IMR-90 (cell line): ENCODE measurements at regions of chr17 and their contacts with region 1.

Region 1: GRCh38 chr17:59372138-59372857 is 40.8 kb downstream of the YPEL2 start:
- DNase-seq: peak; percentile 54
- ATAC-seq: peak; percentile 78
- H3K4me3 ChIP-seq: no peak overlapping the region
- H3K27ac ChIP-seq: peak overlapping the region; percentile 32; the same call in 1 of the 2 replicates
- H3K4me1 ChIP-seq: peaks cover 20% of the 10 kb centered on the region
- H3K27me3 ChIP-seq: no peaks in the 10 kb centered on the region
- CTCF ChIP-seq: no peak
- POLR2A ChIP-seq: no peak
- RAD21 ChIP-seq: no peak

Region 2: GRCh38 chr17:58974354-58974753 is 397.9 kb before region 1 on chr17:
- CTCF ChIA-PET with region 1: no interaction called
- POLR2A ChIA-PET with region 1: no interaction called
- dilution Hi-C with region 1: no loop called
- in situ Hi-C with region 1: no loop called
- intact Hi-C with region 1: no loop called
- DNase-seq: no peak
- ATAC-seq: no peak
- H3K4me3 ChIP-seq: no peak overlapping the region
- H3K27ac ChIP-seq: no peak overlapping the region
- H3K4me1 ChIP-seq: peaks cover 2% of the 10 kb centered on the region
- H3K27me3 ChIP-seq: no peaks in the 10 kb centered on the region
- CTCF ChIP-seq: no peak
- POLR2A ChIP-seq: no peak
- RAD21 ChIP-seq: no peak

Region 3: DNA sequence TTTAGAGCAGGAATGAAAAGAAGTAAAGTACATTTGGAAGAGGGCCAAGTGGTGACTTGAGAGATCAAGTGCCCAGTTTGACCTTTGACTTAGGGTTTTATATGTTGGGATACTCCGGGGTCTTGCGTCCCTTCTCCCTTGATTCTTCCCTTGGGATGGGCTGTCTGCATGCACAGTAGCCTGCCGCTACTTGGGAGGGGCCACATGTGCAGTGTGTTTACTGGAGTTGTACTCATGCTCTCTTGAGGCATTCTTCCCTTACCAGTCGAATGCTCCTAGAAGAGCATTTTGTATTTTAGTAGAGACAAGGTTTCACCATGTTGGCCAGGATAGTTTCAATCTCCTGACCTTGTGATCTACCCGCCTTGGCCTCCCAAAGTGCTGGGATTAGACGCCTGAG is 128.2 kb before region 1 on chr17:
- CTCF ChIA-PET with region 1: no interaction called
- POLR2A ChIA-PET with region 1: no interaction called
- dilution Hi-C with region 1: no loop called
- in situ Hi-C with region 1: no loop called
- intact Hi-C with region 1: no loop called
- DNase-seq: no peak
- ATAC-seq: no peak
- H3K4me3 ChIP-seq: no peak overlapping the region
- H3K27ac ChIP-seq: no peak overlapping the region
- H3K4me1 ChIP-seq: no peaks in the 10 kb centered on the region
- H3K27me3 ChIP-seq: no peaks in the 10 kb centered on the region
- CTCF ChIP-seq: no peak
- POLR2A ChIP-seq: no peak
- RAD21 ChIP-seq: no peak

Region 4: GRCh38 chr17:59296771-59297500 is 75.4 kb before region 1 on chr17:
- CTCF ChIA-PET with region 1: no interaction called
- POLR2A ChIA-PET with region 1: no interaction called
- dilution Hi-C with region 1: no loop called
- in situ Hi-C with region 1: no loop called
- intact Hi-C with region 1: no loop called
- DNase-seq: no peak
- ATAC-seq: no peak
- H3K4me3 ChIP-seq: no peak overlapping the region
- H3K27ac ChIP-seq: no peak overlapping the region
- H3K4me1 ChIP-seq: no peaks in the 10 kb centered on the region
- H3K27me3 ChIP-seq: peaks cover 1% of the 10 kb centered on the region; the same call in 1 of the 2 replicates
- CTCF ChIP-seq: no peak
- POLR2A ChIP-seq: no peak
- RAD21 ChIP-seq: no peak

Region 5: GRCh38 chr17:59423137-59423703 is 50.9 kb after region 1 on chr17:
- CTCF ChIA-PET with region 1: no interaction called
- POLR2A ChIA-PET with region 1: no interaction called
- dilution Hi-C with region 1: no loop called
- in situ Hi-C with region 1: no loop called
- intact Hi-C with region 1: loop called (anchors 5 kb)
- DNase-seq: peak; percentile 24
- ATAC-seq: peak; percentile 46
- H3K4me3 ChIP-seq: no peak overlapping the region
- H3K27ac ChIP-seq: no peak overlapping the region
- H3K4me1 ChIP-seq: peaks cover 8% of the 10 kb centered on the region
- H3K27me3 ChIP-seq: peaks cover 7% of the 10 kb centered on the region
- CTCF ChIP-seq: no peak
- POLR2A ChIP-seq: no peak
- RAD21 ChIP-seq: no peak